Mammary epithelial cell (primary cell): ENCODE measurements at regions of chr5 and their contacts with region 1.

Region 1: DNA sequence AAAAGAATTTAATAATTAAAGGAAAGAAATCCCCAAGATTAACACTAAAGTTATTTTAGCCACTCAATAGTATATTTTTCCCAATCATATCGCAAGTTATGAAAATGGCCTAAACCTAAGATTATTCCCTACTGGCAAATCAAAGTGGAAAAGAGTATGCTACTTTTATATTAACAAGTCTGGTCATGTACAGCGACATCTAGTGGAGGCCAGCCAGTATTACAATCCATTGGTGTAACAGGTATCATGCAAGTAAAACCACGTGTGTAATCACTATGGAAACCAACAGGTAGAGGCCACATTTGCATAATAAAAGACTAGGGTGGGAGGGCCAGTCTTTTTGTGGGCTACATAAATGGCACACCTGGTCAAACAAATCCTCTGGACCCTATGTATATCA is 976.4 kb upstream of the CDH9 start:
- DNase-seq: peak; percentile 21
- H3K4me3 ChIP-seq: no peak overlapping the region
- H3K27ac ChIP-seq: no peak overlapping the region
- H3K4me1 ChIP-seq: no peaks in the 10 kb centered on the region
- H3K27me3 ChIP-seq: no peaks in the 10 kb centered on the region
- CTCF ChIP-seq: peak; percentile 46 to 56

Region 2: GRCh38 chr5:27020973-27021372 is 993.8 kb before region 1 on chr5:
- CTCF ChIA-PET with region 1: no interaction called
- dilution Hi-C with region 1: no loop called
- in situ Hi-C with region 1: no loop called
- intact Hi-C with region 1: loop called (anchors 2 kb)
- DNase-seq: peak; percentile 23
- H3K4me3 ChIP-seq: no peak overlapping the region
- H3K27ac ChIP-seq: no peak overlapping the region
- H3K4me1 ChIP-seq: no peaks in the 10 kb centered on the region
- H3K27me3 ChIP-seq: no peaks in the 10 kb centered on the region
- CTCF ChIP-seq: peak in 1 of 2 donors; percentile 49

Region 3: DNA sequence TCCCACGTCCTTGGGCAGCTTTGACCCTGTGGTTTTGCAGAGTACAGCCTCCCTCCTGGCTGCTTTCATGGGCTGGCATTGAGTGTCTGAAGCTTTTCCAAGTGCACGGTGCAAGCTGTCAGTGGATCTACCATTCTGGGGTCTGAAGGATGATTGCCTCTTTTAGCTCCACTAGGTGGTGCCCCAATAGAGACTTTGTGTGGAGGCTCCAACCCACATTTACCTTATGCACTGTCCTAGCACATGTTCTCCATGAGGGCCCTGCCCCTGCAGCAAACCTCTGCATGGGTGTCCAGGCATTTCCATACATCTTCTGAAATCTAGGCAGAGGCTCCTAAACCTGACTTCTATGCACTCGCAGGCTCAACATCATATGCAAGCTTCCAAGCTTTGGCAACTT is 332.2 kb before region 1 on chr5:
- CTCF ChIA-PET with region 1: no interaction called
- dilution Hi-C with region 1: no loop called
- in situ Hi-C with region 1: no loop called
- intact Hi-C with region 1: loop called (anchors 1 kb)
- DNase-seq: peak; percentile 10
- H3K4me3 ChIP-seq: no peak overlapping the region
- H3K27ac ChIP-seq: no peak overlapping the region
- H3K4me1 ChIP-seq: no peaks in the 10 kb centered on the region
- H3K27me3 ChIP-seq: no peaks in the 10 kb centered on the region
- CTCF ChIP-seq: no peak

Region 4: GRCh38 chr5:27928060-27928459 is 86.7 kb before region 1 on chr5:
- CTCF ChIA-PET with region 1: no interaction called
- dilution Hi-C with region 1: no loop called
- in situ Hi-C with region 1: no loop called
- intact Hi-C with region 1: no loop called
- DNase-seq: no peak
- H3K4me3 ChIP-seq: no peak overlapping the region
- H3K27ac ChIP-seq: no peak overlapping the region
- H3K4me1 ChIP-seq: no peaks in the 10 kb centered on the region
- H3K27me3 ChIP-seq: no peaks in the 10 kb centered on the region
- CTCF ChIP-seq: no peak

Region 5: GRCh38 chr5:28516657-28517175 is 501.9 kb after region 1 on chr5:
- CTCF ChIA-PET with region 1: no interaction called
- dilution Hi-C with region 1: no loop called
- in situ Hi-C with region 1: no loop called
- intact Hi-C with region 1: no loop called
- DNase-seq: no peak
- H3K4me3 ChIP-seq: no peak overlapping the region
- H3K27ac ChIP-seq: no peak overlapping the region
- H3K4me1 ChIP-seq: no peaks in the 10 kb centered on the region
- H3K27me3 ChIP-seq: no peaks in the 10 kb centered on the region
- CTCF ChIP-seq: no peak